ENCODE measurements at regions of chr17 and their contacts with region 1.

Region 1: GRCh38 chr17:66727639-66728570 is 107.0 kb upstream of the CACNG5 start:
- DNase-seq: peak; percentile 45 to 81 (median 80)
- ATAC-seq: peak; percentile 61 to 75
- H3K4me3 ChIP-seq: no peak overlapping the region
- H3K27ac ChIP-seq: no peak overlapping the region
- H3K4me1 ChIP-seq: peaks cover 2% of the 10 kb centered on the region
- H3K27me3 ChIP-seq: no peaks in the 10 kb centered on the region

Region 2: DNA sequence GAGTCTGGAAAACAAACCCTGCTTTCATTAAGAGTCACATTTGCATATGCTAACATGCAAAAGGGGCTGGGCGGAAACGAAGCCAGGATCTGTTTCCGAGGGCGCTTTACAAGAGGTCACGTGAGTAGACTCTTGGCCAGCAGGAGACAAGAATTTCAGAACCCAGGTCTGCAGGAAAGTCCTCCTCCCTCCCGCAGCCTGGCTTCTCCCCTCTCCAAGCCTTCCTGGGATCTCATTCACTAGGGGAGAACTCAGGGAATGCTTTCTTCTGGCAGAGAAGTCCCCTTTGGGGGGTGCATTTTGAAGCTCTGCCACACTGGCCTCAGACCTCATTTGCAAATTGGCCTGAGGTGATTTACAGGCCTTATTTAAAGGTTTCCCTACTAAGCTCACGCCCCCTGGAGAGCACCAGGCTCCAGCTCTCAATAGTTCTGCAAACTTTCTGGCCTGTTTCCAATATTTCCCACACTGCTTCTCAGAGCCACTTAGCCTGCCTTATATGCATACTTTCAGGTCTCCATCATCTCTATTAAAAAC is 49.9 kb after region 1 on chr17:
- intact Hi-C with region 1: no loop called
- DNase-seq: no peak
- ATAC-seq: no peak
- H3K4me3 ChIP-seq: no peak overlapping the region
- H3K27ac ChIP-seq: no peak overlapping the region
- H3K4me1 ChIP-seq: no peaks in the 10 kb centered on the region
- H3K27me3 ChIP-seq: no peaks in the 10 kb centered on the region

Region 3: DNA sequence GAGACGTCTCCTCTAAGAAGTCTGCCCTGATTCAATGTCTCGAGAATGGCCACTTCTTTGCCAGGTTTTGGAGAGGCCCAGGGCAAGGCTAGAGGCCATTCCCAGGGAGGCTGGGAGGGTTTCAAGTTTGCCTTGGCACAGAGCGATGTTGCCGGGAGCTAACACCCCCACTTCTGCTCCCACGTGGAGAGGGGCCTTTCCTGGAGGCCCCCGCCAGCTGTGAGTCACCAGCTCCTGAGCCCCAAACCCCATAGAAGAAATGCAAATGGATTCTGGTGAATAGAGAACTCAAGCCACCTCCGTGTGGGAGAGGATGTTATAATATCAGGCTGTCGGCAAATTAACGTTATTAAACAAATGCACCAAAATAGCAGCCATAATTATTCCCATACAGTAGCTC is 169.2 kb after region 1 on chr17:
- intact Hi-C with region 1: loop called in 1 of 4 experiments (anchors 5 kb)
- DNase-seq: no peak
- ATAC-seq: no peak
- H3K4me3 ChIP-seq: no peak overlapping the region
- H3K27ac ChIP-seq: no peak overlapping the region
- H3K4me1 ChIP-seq: no peaks in the 10 kb centered on the region
- H3K27me3 ChIP-seq: no peaks in the 10 kb centered on the region

Region 4: DNA sequence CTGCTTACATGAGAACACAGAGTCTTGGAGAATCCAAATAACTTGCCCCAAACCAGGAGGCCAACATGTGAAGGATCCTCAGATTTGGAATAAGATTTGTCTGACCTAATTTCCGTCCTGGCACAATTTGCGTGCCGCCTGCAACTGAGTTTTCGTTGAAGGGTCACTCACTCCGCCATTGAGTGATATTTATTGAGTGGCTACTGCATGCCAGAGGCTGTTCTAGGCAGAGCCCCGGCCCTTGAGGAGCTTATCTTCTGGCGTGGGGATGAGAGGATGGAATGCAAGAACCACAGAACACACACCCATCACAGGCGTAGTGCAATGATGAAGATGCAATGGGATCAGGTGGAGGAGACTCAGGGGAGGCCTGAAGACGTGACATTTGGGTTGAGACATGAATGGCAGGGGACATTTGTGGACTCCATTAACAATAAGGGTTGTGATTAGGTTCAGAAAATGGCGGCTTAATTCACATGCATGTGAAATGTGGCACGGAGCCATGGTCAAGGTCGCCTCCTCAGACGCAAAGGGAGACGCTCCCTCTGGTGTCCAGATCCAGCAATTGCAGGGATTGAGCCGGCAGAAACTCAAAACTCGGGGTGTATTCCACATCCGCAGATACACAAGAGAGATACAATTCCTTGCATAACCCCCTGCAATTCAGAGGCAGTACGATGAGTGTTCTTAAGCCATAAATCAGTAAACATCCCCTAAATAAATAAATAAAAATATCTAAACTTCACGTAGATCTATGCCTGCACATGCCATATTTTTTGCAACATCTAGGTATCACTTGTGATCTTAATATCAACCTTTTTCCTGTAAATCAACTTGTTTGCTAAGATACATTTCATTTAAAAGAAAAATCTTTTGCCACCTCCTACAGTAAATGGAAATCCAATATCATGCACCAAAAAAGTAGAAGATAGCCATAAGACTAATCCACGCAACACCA is 178.7 kb after region 1 on chr17:
- intact Hi-C with region 1: loop called in 3 of 4 experiments (anchors 5 kb)
- DNase-seq: peak; percentile 83 to 94 (median 88)
- ATAC-seq: no peak
- H3K4me3 ChIP-seq: no peak overlapping the region
- H3K27ac ChIP-seq: no peak overlapping the region
- H3K4me1 ChIP-seq: no peaks in the 10 kb centered on the region
- H3K27me3 ChIP-seq: no peaks in the 10 kb centered on the region

Region 5: GRCh38 chr17:67431249-67432048 is 703.5 kb after region 1 on chr17:
- intact Hi-C with region 1: no loop called
- DNase-seq: no peak
- ATAC-seq: peak in 1 of 2 donors; percentile 7
- H3K4me3 ChIP-seq: no peak overlapping the region
- H3K27ac ChIP-seq: no peak overlapping the region
- H3K4me1 ChIP-seq: peaks cover 5% of the 10 kb centered on the region
- H3K27me3 ChIP-seq: no peaks in the 10 kb centered on the region

Measured in right cardiac atrium (tissue), 5 donors.